Caco-2 (cell line): ENCODE measurements at regions of chr6 and their contacts with region 1.

Region 1: GRCh38 chr6:31827286-31828079 is at the start of gene HSPA1B:
- DNase-seq: peak; percentile 98 to 100
- H3K4me3 ChIP-seq: peak within 1 kb of the TSS; percentile 71
- H3K4me3 Mint-ChIP-seq: peak within 1 kb of the TSS; percentile 96
- H3K27ac Mint-ChIP-seq: peak within 1 kb of the TSS; percentile 99
- H3K4me1 ChIP-seq: peaks cover 39% of the 10 kb centered on the region
- H3K4me1 Mint-ChIP-seq: peaks cover 10% of the 10 kb centered on the region
- H3K27me3 ChIP-seq: no peaks in the 10 kb centered on the region
- H3K27me3 Mint-ChIP-seq: no peaks in the 10 kb centered on the region
- CTCF ChIP-seq: no peak
- total RNA-seq, gene HSPA1B: 99.0 and 112 TPM in 2 replicates

Region 2: GRCh38 chr6:31541658-31542521 is 285.6 kb before region 1 on chr6 and contains the start of gene DDX39B:
- CTCF ChIA-PET with region 1: no interaction called
- POLR2A ChIA-PET with region 1: no interaction called
- intact Hi-C with region 1: no loop called
- DNase-seq: peak; percentile 94 to 96
- H3K4me3 ChIP-seq: peak within 1 kb of the TSS; percentile 67
- H3K4me3 Mint-ChIP-seq: peak within 1 kb of the TSS; percentile 73
- H3K27ac Mint-ChIP-seq: peak within 1 kb of the TSS; percentile 91
- H3K4me1 ChIP-seq: no peaks in the 10 kb centered on the region; the same call in 1 of the 2 replicates
- H3K4me1 Mint-ChIP-seq: peaks cover 23% of the 10 kb centered on the region
- H3K27me3 ChIP-seq: no peaks in the 10 kb centered on the region
- H3K27me3 Mint-ChIP-seq: no peaks in the 10 kb centered on the region
- CTCF ChIP-seq: no peak
- total RNA-seq, gene DDX39B: 416 and 423 TPM in 2 replicates

Region 3: DNA sequence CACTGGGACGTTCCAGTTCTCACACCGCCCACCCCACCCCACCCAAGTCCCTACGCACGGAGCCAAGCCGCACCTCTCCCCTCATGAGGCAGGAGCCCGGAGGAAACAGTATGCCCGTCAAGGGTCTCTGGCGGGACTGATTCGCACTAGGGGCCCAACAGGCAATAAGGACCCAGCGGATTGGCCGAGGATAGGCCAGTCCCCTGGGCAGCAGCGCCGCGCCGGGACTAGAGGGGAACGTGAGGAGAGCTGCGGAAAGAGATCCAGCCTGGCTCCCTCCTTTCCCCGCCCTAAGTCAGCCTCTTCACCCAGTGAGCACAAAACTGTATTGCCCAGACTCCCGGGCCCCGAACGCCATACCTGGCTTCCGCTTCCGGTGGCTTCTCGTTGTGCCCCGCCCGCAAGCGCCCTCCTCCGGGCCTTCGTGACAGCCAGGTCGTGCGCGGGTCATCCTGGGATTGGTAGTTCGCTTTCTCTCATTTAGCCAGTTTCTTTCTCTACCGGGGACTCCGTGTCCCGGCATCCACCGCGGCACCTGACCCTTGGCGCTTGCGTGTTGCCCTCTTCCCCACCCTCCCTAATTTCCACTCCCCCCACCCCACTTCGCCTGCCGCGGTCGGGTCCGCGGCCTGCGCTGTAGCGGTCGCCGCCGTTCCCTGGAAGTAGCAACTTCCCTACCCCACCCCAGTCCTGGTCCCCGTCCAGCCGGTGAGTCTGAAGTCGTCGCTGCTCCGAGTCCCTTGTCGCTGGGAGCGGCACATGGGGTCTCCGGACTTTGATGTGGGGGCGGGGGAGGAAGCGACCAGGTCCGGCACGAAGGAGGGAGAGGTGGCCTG is 161.8 kb before region 1 on chr6 and contains the start of gene CSNK2B:
- CTCF ChIA-PET with region 1: no interaction called
- POLR2A ChIA-PET with region 1: interaction called, 5 read pairs
- intact Hi-C with region 1: loop called (anchors 5 kb)
- DNase-seq: peak; percentile 97 to 98
- H3K4me3 ChIP-seq: peak within 1 kb of the TSS; percentile 90
- H3K4me3 Mint-ChIP-seq: peak within 1 kb of the TSS; percentile 86
- H3K27ac Mint-ChIP-seq: peak within 1 kb of the TSS; percentile 96
- H3K4me1 ChIP-seq: peaks cover 17% of the 10 kb centered on the region
- H3K4me1 Mint-ChIP-seq: peaks cover 25% of the 10 kb centered on the region
- H3K27me3 ChIP-seq: no peaks in the 10 kb centered on the region
- H3K27me3 Mint-ChIP-seq: no peaks in the 10 kb centered on the region
- CTCF ChIP-seq: no peak
- total RNA-seq, gene CSNK2B: 219 and 221 TPM in 2 replicates

Region 4: GRCh38 chr6:31729515-31729978 is 97.9 kb before region 1 on chr6:
- CTCF ChIA-PET with region 1: interaction called, 4 read pairs
- POLR2A ChIA-PET with region 1: interaction called, 8 read pairs
- intact Hi-C with region 1: loop called (anchors 1 kb)
- DNase-seq: peak; percentile 94
- H3K4me3 ChIP-seq: peak overlapping the region; percentile 58
- H3K4me3 Mint-ChIP-seq: peak overlapping the region; percentile 87
- H3K27ac Mint-ChIP-seq: peak overlapping the region; percentile 84
- H3K4me1 ChIP-seq: peaks cover 13% of the 10 kb centered on the region
- H3K4me1 Mint-ChIP-seq: peaks cover 27% of the 10 kb centered on the region
- H3K27me3 ChIP-seq: no peaks in the 10 kb centered on the region
- H3K27me3 Mint-ChIP-seq: no peaks in the 10 kb centered on the region
- CTCF ChIP-seq: peak; percentile 75 to 89

Region 5: GRCh38 chr6:31795616-31796298 is 31.7 kb before region 1 on chr6 and contains the start of gene VARS1:
- CTCF ChIA-PET with region 1: interaction called, 3 read pairs
- POLR2A ChIA-PET with region 1: interaction called, 6 read pairs
- intact Hi-C with region 1: loop called (anchors 1 kb)
- DNase-seq: peak; percentile 92 to 95
- H3K4me3 ChIP-seq: peak within 1 kb of the TSS; percentile 80
- H3K4me3 Mint-ChIP-seq: peak within 1 kb of the TSS; percentile 98
- H3K27ac Mint-ChIP-seq: peak within 1 kb of the TSS; percentile 94
- H3K4me1 ChIP-seq: 0 out of 2 replicates have a peak, but pooled peaks cover 3% of the 10 kb centered on the region
- H3K4me1 Mint-ChIP-seq: peaks cover 15% of the 10 kb centered on the region
- H3K27me3 ChIP-seq: no peaks in the 10 kb centered on the region
- H3K27me3 Mint-ChIP-seq: no peaks in the 10 kb centered on the region
- CTCF ChIP-seq: peak; percentile 78 to 94
- total RNA-seq, gene VARS1: 132 and 135 TPM in 2 replicates

Region 6: GRCh38 chr6:31815025-31815838 is 12.3 kb before region 1 on chr6 and contains the starts of genes HSPA1A and HSPA1L:
- CTCF ChIA-PET with region 1: interaction called, 4 read pairs
- POLR2A ChIA-PET with region 1: interaction called, 79 read pairs
- intact Hi-C with region 1: no loop called
- DNase-seq: peak; percentile 97 to 99
- H3K4me3 ChIP-seq: peak within 1 kb of the TSS; percentile 38
- H3K4me3 Mint-ChIP-seq: peak within 1 kb of the TSS; percentile 89
- H3K27ac Mint-ChIP-seq: peak within 1 kb of the TSS; percentile 96
- H3K4me1 ChIP-seq: peaks cover 30% of the 10 kb centered on the region
- H3K4me1 Mint-ChIP-seq: peaks cover 12% of the 10 kb centered on the region
- H3K27me3 ChIP-seq: no peaks in the 10 kb centered on the region
- H3K27me3 Mint-ChIP-seq: no peaks in the 10 kb centered on the region
- CTCF ChIP-seq: no peak
- total RNA-seq, gene HSPA1A: 77.3 and 96.9 TPM in 2 replicates
- total RNA-seq, gene HSPA1L: 0.86 and 1.6 TPM in 2 replicates